ENCODE measurements at regions of chr5 and their contacts with region 1.

Region 1: DNA sequence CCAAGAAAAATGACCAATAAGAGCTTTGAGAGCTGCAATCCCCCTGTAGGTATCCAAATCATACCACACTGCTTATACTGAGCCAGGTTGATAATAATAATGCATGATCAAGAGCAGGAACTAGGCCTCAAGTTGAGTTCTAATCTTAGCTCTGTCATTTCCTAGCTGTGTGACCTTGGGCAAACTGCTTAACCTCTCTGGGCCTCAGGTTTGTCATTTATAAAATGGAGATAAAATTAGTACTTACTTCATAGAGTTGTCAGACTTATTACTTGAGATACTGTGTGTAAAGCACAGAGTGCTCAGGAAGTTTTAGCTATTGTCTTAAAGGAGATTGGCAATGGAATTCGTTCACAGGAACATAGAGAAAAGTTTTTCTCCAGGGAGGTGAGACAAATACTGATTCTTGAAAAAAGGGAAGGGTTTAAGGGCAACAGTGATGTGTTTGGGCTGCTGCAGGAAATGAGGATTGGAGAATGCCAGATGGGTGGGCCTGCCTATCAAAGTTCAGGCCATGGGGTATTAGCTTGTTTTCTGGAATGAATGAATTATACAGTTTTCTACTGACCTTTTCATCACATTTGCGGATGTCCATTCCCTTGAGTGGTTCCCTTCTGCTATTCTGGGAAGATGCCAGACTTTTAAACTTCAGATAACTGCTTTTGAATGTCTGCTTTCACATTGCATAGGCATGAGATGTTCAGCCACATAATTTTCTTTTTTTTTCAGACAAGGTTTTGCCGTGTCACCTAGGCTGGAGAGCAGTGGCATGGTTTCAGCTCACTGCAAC is 10.2 kb upstream of the ATP6V0E1 start:
- DNase-seq: no peak
- H3K4me3 ChIP-seq: no peak overlapping the region
- H3K27ac ChIP-seq: no peak overlapping the region
- H3K4me1 ChIP-seq: no peaks in the 10 kb centered on the region
- H3K27me3 ChIP-seq: no peaks in the 10 kb centered on the region
- CTCF ChIP-seq: no peak

Region 2: GRCh38 chr5:172777881-172778814 is 195.2 kb before region 1 on chr5:
- intact Hi-C with region 1: no loop called
- DNase-seq: peak; percentile 79
- H3K4me3 ChIP-seq: no peak overlapping the region
- H3K27ac ChIP-seq: peak overlapping the region; percentile 100
- H3K4me1 ChIP-seq: peaks cover 20% of the 10 kb centered on the region
- H3K27me3 ChIP-seq: no peaks in the 10 kb centered on the region
- CTCF ChIP-seq: no peak

Region 3: GRCh38 chr5:173283318-173284288 is 310.3 kb after region 1 on chr5:
- intact Hi-C with region 1: loop called (anchors 10 kb)
- DNase-seq: peak; percentile 72
- H3K4me3 ChIP-seq: no peak overlapping the region
- H3K27ac ChIP-seq: no peak overlapping the region
- H3K4me1 ChIP-seq: peaks cover 3% of the 10 kb centered on the region
- H3K27me3 ChIP-seq: no peaks in the 10 kb centered on the region
- CTCF ChIP-seq: peak; percentile 26

Measured in colonic mucosa (tissue), 4 donors.